ENCODE measurements at regions of chr9 and their contacts with region 1.

Region 1: GRCh38 chr9:35116898-35117551 is 1.4 kb upstream of the ATOSB start:
- DNase-seq: peak; percentile 98
- H3K4me3 ChIP-seq: peak overlapping the region; percentile 77
- H3K27ac ChIP-seq: peak overlapping the region; percentile 98
- H3K4me1 ChIP-seq: peaks cover 28% of the 10 kb centered on the region
- H3K27me3 ChIP-seq: no peaks in the 10 kb centered on the region

Region 2: DNA sequence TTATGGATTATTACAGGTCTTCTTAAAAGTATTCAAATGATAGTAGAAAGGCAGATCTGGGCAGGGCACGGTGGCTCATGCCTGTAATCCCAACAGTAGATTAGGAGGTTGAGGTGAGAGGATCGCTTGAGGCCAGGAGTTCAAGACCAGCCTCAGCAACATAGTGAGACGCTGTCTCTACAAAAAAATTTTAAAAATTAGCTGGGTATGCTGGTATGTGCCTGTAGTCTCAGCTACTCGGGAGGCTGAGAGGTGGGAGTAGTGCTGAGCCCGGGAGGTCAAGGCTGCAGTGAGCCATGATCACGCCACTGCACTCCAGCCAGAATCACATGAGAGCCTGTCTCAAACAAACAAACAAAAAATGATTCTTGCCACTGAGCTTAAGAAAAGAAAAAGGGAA is 894.6 kb before region 1 on chr9:
- in situ Hi-C with region 1: no loop called
- DNase-seq: peak; percentile 66
- H3K4me3 ChIP-seq: peak overlapping the region; percentile 32; the same call in 1 of the 2 replicates
- H3K27ac ChIP-seq: peak overlapping the region; percentile 79
- H3K4me1 ChIP-seq: peaks cover 42% of the 10 kb centered on the region
- H3K27me3 ChIP-seq: no peaks in the 10 kb centered on the region

Region 3: DNA sequence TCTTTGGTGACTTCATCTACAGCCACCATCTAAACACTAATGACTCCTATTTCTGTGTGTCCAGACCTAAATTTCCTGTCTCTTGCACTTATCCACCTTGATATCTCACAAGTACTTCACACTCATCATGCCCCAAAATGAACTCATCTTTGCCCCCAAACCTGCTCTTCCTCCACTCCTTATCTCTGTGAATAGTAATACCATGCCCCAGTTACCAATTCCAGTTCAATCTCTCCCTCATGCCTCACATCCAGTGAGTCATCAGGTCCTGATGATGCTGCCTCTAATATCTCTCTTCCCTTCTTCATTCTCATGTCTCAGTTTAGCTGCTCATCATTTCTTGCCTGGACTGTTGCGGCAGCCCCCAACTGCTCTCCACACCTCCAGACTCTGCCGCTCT is 142.4 kb before region 1 on chr9:
- in situ Hi-C with region 1: no loop called
- DNase-seq: no peak
- H3K4me3 ChIP-seq: no peak overlapping the region
- H3K27ac ChIP-seq: no peak overlapping the region
- H3K4me1 ChIP-seq: no peaks in the 10 kb centered on the region
- H3K27me3 ChIP-seq: peaks cover 27% of the 10 kb centered on the region

Region 4: GRCh38 chr9:35267710-35268109 is 150.7 kb after region 1 on chr9:
- in situ Hi-C with region 1: loop called (anchors 10 kb)
- DNase-seq: peak; percentile 45
- H3K4me3 ChIP-seq: no peak overlapping the region
- H3K27ac ChIP-seq: no peak overlapping the region
- H3K4me1 ChIP-seq: peaks cover 4% of the 10 kb centered on the region
- H3K27me3 ChIP-seq: no peaks in the 10 kb centered on the region

Region 5: GRCh38 chr9:35464141-35465025 is 347.4 kb after region 1 on chr9:
- in situ Hi-C with region 1: loop called (anchors 10 kb)
- DNase-seq: peak; percentile 42
- H3K4me3 ChIP-seq: no peak overlapping the region
- H3K27ac ChIP-seq: no peak overlapping the region
- H3K4me1 ChIP-seq: peaks cover 13% of the 10 kb centered on the region
- H3K27me3 ChIP-seq: peaks cover 7% of the 10 kb centered on the region; the same call in 1 of the 2 replicates

Region 6: DNA sequence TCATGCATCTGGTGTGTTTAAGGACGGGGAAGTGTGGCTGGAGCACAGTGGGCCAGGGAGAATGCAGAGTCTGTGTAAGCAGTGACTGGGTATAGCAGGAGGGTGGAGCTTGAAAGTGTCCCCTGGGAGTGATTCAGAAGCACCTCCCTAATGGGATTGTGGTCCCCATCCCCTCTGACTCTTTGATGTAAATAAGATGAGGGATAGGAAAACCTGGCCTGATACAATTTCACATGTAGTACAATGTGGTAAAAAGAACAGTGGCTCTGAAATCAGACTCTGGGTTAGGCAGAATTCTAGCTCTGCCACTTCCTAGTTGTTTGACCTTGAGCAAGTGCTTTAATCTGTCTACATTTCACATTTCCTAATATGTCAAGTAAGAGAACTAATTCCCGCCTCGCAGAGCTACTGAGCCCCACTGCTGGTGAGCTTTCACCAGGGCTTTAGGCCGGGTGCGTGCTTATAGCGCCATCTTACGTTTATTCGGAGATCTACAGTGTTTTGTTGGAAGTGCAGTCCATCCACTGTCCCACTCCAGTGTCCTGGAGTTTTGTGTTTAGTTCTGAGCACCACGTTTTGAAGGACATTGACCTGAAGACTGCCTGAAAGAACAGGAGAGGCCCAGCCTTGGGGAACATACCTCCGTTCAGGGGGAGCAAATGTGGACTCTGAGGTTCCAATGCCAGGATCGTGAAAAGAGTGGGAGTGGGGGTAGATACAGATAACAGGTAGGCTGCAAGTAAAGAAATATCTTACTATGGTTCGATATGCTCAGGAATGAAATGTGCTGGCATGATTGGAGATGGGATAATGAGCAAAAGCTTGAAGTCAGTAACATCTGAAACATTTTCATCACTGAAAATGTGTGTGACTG is 436.9 kb after region 1 on chr9:
- in situ Hi-C with region 1: loop called (anchors 10 kb)
- DNase-seq: peak; percentile 89
- H3K4me3 ChIP-seq: no peak overlapping the region
- H3K27ac ChIP-seq: peak overlapping the region; percentile 10
- H3K4me1 ChIP-seq: peaks cover 32% of the 10 kb centered on the region
- H3K27me3 ChIP-seq: no peaks in the 10 kb centered on the region

Measured in GM23248 (cell line).